ENCODE measurements at regions of chr22 and their contacts with region 1.

Region 1: DNA sequence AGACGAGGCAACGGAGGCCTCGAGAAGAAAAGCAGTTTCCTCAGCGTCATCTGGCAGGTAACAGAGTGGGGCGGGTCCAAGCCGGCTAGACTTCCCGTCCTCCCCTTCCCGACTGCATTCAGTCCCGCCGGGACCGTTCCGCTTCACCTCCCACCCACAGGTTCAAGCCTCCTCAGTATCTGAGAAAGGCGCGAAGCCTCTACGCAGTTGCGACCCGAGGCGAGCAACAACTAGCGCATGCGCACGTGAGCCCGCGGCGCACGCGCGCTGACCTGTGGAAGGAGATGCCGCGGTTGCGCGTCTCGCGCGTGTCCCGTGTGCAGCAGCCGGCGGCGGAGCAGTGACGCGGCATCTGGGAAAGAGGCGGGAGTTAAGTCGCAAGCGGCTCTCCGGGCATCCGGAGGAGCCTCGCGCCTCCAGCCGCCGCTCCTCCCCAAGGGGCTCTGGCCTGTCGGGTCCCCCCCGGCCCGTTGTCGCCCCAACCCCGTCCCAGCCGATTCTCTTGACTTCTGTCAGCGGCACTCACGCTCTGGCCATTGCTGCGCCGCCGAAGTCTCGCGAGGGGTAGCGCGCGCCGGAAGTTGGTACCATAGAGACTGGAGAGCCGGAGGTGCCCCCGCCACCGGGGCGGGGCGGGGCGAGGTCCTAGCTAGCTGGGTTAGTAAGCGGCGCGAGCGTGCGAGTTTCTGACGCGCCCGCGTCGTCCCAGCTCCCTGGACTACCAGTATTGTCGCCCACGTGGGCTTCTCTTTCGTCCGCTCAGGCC is at the start of gene THAP7:
- DNase-seq: peak; percentile 96 to 98
- ATAC-seq: peak; percentile 96 to 98 (median 97)
- H3K4me3 ChIP-seq: peak within 1 kb of the TSS; percentile 54 to 82 (median 73)
- H3K27ac ChIP-seq: peak within 1 kb of the TSS; percentile 92 to 99 (median 98)
- H3K4me1 ChIP-seq: peaks cover 15 to 39% (median 33%) of the 10 kb centered on the region in 9 donors
- H3K27me3 ChIP-seq: no peaks in the 10 kb centered on the region
- CTCF ChIP-seq: no peak
- total RNA-seq, gene THAP7: 15.5 to 26.3 (median 17.5) TPM

Region 2: GRCh38 chr22:19995626-19996335 is 1006.0 kb before region 1 on chr22:
- intact Hi-C with region 1: no loop called
- DNase-seq: peak in 1 of 2 donors; percentile 25
- ATAC-seq: peak in 2 of 8 donors; percentile 2 to 38
- H3K4me3 ChIP-seq: no peak overlapping the region
- H3K27ac ChIP-seq: peak overlapping the region in 4 of 10 donors; percentile 8 to 31 (median 18)
- H3K4me1 ChIP-seq: peaks cover 21 to 62% (median 49%) of the 10 kb centered on the region in 9 donors
- H3K27me3 ChIP-seq: no peaks in the 10 kb centered on the region
- CTCF ChIP-seq: no peak

Region 3: DNA sequence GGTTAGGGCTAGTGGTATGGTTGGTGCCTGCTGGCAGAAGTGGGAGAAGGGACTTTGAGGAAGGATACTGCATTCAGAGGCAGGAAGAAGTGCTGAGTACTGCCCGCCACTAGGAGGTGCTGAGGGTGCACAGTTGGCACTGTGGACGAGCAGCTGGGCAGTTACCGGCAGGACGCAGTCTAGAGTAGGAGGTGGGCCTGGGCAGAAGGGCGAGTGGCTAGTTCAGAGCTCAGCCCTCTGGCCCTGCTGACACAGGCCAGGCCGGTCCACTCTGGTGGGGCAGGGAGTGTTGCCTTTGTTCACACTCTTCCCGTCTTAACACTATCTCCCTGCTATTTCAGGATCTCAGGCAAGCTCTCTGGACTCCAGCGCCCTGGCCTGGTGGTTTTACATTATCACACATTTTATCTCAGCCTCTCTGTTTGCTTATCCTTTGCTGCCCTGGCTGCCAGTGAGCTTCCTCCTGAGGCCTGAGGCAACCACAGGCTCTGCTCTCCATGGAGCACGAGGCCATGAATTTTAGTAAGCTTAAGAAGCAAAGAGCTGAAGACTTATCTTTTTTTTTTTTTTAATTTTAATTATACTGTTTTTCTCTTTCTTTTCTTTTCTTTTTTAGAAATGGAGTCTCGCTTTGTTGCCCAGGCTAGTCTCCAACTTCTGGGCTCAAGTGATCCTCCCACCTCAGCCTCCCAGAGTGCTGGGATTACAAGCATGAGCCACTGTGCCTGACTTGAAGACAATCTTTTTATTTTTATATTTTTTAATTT is 116.0 kb before region 1 on chr22:
- intact Hi-C with region 1: loop called in 2 of 10 experiments (anchors 10 kb)
- DNase-seq: peak; percentile 77 to 81
- ATAC-seq: peak; percentile 91 to 96 (median 95)
- H3K4me3 ChIP-seq: no peak overlapping the region
- H3K27ac ChIP-seq: peak overlapping the region in 9 of 10 donors; percentile 7 to 85 (median 67)
- H3K4me1 ChIP-seq: peaks cover 0 to 19% (median 12%) of the 10 kb centered on the region in 9 donors
- H3K27me3 ChIP-seq: no peaks in the 10 kb centered on the region
- CTCF ChIP-seq: peak; percentile 67 to 85 (median 81)

Region 4: DNA sequence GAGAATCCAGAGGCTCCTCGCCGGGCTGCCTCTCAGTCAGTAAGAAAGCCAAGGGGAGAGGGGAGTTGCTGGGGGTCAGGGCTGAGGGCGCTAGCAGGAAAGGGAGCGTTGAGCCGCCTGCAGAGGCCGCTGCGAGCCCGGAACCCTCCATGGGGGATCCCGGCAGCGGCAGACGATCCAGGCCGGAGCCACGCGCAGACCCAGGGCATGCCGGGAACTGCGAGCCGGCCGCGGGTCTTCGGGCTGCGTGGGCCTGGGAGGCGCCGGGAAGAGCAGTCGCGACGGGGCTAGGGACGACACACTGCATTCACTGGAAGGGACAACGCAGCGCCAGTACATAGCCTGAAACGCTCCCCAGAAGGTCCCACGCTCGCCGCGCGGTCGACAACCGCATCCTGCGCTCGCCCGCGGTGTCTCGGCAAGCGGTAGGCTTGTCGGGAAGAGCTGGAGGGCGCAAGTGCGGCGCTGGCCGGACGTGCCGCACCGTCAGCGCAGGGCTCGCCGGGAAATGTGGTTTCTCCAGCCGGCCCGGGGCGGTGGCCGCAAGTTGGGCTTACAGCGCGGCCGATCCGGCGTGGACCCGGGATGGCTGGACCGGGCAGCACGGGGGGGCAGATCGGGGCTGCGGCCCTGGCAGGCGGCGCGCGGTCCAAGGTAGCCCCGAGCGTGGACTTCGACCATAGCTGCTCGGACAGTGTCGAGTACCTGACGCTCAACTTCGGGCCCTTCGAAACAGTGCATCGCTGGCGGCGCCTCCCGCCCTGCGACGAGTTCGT is 19.8 kb before region 1 on chr22 and contains the start of gene LZTR1:
- intact Hi-C with region 1: loop called in 3 of 10 experiments (anchors 1 to 2 kb)
- DNase-seq: peak; percentile 80 to 83
- ATAC-seq: peak; percentile 93 to 97 (median 96)
- H3K4me3 ChIP-seq: peak within 1 kb of the TSS; percentile 61 to 98 (median 76)
- H3K27ac ChIP-seq: peak within 1 kb of the TSS; percentile 75 to 98 (median 92)
- H3K4me1 ChIP-seq: peaks cover 20 to 42% (median 34%) of the 10 kb centered on the region in 9 donors
- H3K27me3 ChIP-seq: no peaks in the 10 kb centered on the region
- CTCF ChIP-seq: peak; percentile 8 to 79 (median 64)
- total RNA-seq, gene LZTR1: 14.7 to 32.5 (median 23.7) TPM

Region 5: GRCh38 chr22:21045585-21046294 is 44.0 kb after region 1 on chr22 and contains the start of gene LRRC74B:
- intact Hi-C with region 1: loop called in 1 of 10 experiments (anchors 5 kb)
- DNase-seq: peak; percentile 89 to 91
- ATAC-seq: peak; percentile 92 to 98 (median 98)
- H3K4me3 ChIP-seq: peak within 1 kb of the TSS; percentile 27 to 63 (median 54)
- H3K27ac ChIP-seq: peak within 1 kb of the TSS in 1 of 10 donors; percentile 35
- H3K4me1 ChIP-seq: peaks cover 5 to 16% (median 14%) of the 10 kb centered on the region in 9 donors
- H3K27me3 ChIP-seq: peaks cover 0 to 7% (median 0%) of the 10 kb centered on the region in 7 donors
- CTCF ChIP-seq: no peak
- total RNA-seq, gene LRRC74B: not detected